GM10248 (cell line): ENCODE measurements at regions of chr11 and their contacts with region 1.

Region 1: GRCh38 chr11:75706260-75706729 is 11.3 kb upstream of the MOGAT2 start:
- DNase-seq: peak; percentile 85
- CTCF ChIP-seq: peak; percentile 92

Region 2: GRCh38 chr11:75673977-75674582 is 32.2 kb before region 1 on chr11:
- CTCF ChIA-PET with region 1: interaction called, 14 read pairs
- POLR2A ChIA-PET with region 1: no interaction called
- DNase-seq: no peak
- CTCF ChIP-seq: no peak

Region 3: DNA sequence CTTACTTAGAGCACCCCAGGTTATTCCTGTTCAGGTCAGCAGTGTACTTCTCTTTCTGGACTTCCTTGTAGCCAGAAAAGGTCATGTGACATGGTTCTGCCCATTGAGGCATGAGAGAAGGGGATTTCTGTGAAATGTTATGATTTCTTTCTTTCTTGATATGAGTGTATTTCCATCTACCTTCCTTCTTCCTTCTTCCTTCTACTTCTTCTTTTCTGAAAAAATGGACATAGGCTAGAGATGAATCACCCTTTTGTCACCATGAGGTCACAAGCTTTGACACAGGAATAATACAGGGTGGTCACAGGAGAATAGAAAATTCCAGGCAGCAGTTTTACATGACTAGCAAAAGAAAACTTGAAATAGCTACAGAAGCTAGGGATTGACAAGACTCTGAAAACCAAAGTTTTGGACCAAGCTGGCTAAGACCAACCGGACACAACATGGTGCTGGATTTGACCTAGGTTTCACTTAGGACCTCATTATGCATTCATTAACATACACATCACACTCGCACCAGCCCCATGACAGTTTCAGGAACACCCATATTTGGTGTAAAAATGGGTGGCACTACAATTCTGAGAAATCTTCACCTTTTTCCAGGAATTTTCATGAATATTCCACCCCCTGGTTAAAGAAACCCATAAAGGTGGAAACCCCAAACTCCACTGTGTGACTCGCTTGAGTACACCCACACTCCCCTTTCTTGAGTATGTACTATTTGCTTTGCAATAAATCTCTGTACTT is 16.3 kb before region 1 on chr11:
- CTCF ChIA-PET with region 1: interaction called, 12 read pairs
- POLR2A ChIA-PET with region 1: no interaction called
- DNase-seq: peak; percentile 46
- CTCF ChIP-seq: no peak

Region 4: DNA sequence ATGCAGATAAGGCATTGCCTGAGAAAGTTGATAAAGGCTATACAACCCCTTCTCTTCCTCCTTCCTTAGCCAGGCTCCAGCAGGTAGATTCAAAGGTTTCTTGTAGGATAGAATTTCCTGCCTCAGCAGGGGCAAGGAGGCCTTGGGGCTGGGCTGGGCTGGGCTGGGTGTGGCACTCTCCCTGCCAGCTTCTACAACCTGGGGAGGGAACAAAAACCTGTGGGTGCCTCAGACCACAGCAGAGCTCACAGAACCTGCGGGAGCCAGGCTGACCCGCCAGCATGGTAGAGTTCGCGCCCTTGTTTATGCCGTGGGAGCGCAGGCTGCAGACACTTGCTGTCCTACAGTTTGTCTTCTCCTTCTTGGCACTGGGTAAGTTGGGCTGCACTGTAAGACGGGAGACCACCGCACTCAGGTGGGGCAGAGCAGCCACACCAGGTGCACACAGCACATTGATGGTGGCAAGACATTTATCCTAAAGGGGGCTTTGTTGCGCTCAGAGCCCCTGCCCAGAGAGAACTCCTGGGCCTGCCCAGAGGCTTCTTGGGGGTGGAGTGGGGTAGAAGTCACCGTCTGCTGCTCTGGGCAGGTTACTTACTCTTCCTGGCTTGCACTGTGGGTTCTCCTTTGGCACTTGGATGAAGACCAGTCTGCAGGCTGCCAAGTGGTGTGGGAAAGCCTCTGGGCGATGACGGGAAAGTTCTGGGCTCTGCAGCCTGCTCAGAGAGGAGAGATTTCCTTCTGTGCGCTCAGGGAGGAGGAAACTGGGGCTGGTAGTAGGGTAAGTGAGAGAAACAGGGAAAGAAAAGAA is 11.5 kb after region 1 on chr11 and contains the start of gene MOGAT2:
- CTCF ChIA-PET with region 1: interaction called, 39 read pairs
- POLR2A ChIA-PET with region 1: no interaction called
- DNase-seq: no peak
- CTCF ChIP-seq: no peak

Region 5: DNA sequence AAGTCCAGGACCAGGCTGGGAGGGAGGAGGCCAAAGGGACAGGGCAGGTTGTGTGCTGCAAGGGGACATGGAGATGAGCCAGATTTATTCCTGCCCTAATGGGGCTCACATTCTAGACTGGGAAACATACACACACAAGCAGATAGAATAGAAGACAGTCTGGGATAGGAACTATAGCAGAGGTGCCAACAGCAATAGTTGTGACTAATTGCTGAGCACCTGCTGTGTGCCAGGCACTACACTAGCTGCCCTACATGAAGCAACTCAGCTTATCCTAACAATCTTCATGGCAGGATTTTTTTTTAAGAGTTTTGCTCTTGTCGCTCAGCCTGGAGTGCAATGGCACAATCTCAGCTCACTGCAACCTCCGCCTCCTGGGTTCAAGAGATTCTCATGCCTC is 22.7 kb after region 1 on chr11:
- CTCF ChIA-PET with region 1: interaction called, 10 read pairs
- POLR2A ChIA-PET with region 1: no interaction called
- DNase-seq: no peak
- CTCF ChIP-seq: no peak

Region 6: GRCh38 chr11:76318744-76319384 is 612.6 kb after region 1 on chr11:
- CTCF ChIA-PET with region 1: interaction called, 13 read pairs
- POLR2A ChIA-PET with region 1: no interaction called
- DNase-seq: peak; percentile 88
- CTCF ChIP-seq: peak; percentile 95